CD4-positive, alpha-beta T cell (primary cell): ENCODE measurements at regions of chr1 and their contacts with region 1.

Region 1: GRCh38 chr1:9494929-9495758 is 44.1 kb upstream of the SLC25A33 start:
- DNase-seq: peak; percentile 40 to 86 (median 57)
- ATAC-seq: peak; percentile 86
- H3K4me3 ChIP-seq: peak overlapping the region; percentile 43
- H3K4me3 Mint-ChIP-seq: peak overlapping the region; percentile 72
- H3K27ac ChIP-seq: no peak overlapping the region
- H3K27ac Mint-ChIP-seq: no peak overlapping the region
- H3K4me1 ChIP-seq: peaks cover 13% of the 10 kb centered on the region
- H3K4me1 Mint-ChIP-seq: peaks cover 6% of the 10 kb centered on the region
- H3K27me3 ChIP-seq: no peaks in the 10 kb centered on the region
- H3K27me3 Mint-ChIP-seq: peaks cover 4% of the 10 kb centered on the region
- CTCF ChIP-seq: peak; percentile 93

Region 2: DNA sequence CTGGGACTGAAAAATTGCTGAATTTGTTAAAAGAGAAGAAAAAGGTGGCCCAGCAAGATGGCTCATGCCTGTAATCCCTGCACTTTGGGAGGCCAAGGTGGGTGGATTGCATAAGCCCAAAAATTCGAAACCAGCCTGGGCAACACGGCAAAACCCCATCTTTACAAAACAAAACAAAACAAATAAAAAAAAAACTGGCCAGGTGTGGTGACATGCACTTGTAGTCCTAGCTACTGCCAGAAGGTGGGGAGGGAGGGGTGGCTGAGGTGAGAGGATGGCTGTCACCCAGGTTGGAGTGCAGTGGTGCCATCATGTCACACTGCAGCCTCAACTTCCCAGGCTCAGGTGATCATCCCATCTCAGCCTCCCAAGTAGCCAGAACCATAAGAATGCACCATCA is 700.6 kb before region 1 on chr1:
- CTCF ChIA-PET with region 1: no interaction called
- POLR2A ChIA-PET with region 1: no interaction called
- intact Hi-C with region 1: no loop called
- DNase-seq: peak in 2 of 14 experiments; percentile 17 to 27
- ATAC-seq: peak; percentile 43
- H3K4me3 ChIP-seq: no peak overlapping the region
- H3K4me3 Mint-ChIP-seq: no peak overlapping the region
- H3K27ac ChIP-seq: no peak overlapping the region
- H3K27ac Mint-ChIP-seq: no peak overlapping the region
- H3K4me1 ChIP-seq: no peaks in the 10 kb centered on the region
- H3K4me1 Mint-ChIP-seq: no peaks in the 10 kb centered on the region
- H3K27me3 ChIP-seq: no peaks in the 10 kb centered on the region
- H3K27me3 Mint-ChIP-seq: no peaks in the 10 kb centered on the region
- CTCF ChIP-seq: no peak

Region 3: DNA sequence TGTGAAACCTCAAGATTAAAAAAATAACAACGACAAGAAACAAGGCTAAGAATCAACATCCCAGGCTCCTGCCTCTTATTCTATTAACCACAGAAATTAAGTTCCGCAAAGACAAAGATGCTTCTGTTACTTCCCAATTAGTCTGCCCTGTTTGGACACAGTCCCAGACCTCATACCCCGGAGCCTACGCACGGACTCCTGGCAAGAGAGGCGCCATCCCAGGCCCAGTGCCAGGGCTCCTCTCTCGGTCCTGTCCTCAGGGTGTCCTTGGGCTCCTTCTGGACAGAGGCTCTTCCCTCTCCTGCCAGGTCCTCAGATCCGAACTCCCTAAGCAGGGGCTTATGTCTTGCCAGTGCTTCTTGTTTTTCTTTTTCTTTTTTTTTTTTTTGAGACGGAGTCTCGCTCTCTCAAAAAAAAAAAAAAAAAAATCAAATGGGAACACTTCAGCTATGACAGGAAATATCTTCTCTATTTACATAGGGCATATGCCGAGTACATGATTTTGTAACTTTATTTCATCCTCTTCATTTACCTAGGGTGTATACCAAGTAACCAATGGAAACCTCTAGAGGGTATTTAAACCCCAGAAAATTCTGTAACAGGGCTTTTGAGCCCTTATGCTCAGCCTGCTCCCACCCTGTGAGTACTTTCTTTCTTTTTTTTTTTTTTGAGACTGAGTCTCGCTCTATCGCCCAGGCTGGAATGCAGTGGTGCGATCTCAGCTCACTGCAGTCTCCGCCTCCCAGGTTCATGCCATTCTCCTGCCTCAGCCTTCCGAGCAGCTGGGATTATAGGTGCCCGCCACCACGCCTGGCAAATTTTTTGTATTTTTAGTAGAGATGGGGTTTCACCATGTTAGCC is 605.0 kb before region 1 on chr1:
- CTCF ChIA-PET with region 1: no interaction called
- POLR2A ChIA-PET with region 1: no interaction called
- intact Hi-C with region 1: no loop called
- DNase-seq: no peak
- ATAC-seq: no peak
- H3K4me3 ChIP-seq: no peak overlapping the region
- H3K4me3 Mint-ChIP-seq: no peak overlapping the region
- H3K27ac ChIP-seq: no peak overlapping the region
- H3K27ac Mint-ChIP-seq: no peak overlapping the region
- H3K4me1 ChIP-seq: no peaks in the 10 kb centered on the region
- H3K4me1 Mint-ChIP-seq: no peaks in the 10 kb centered on the region
- H3K27me3 ChIP-seq: no peaks in the 10 kb centered on the region
- H3K27me3 Mint-ChIP-seq: no peaks in the 10 kb centered on the region
- CTCF ChIP-seq: no peak

Region 4: GRCh38 chr1:9110669-9111356 is 384.3 kb before region 1 on chr1:
- CTCF ChIA-PET with region 1: interaction called, 7 read pairs
- POLR2A ChIA-PET with region 1: no interaction called
- intact Hi-C with region 1: loop called (anchors 2 kb)
- DNase-seq: peak; percentile 76 to 90 (median 82)
- ATAC-seq: peak; percentile 80
- H3K4me3 ChIP-seq: no peak overlapping the region
- H3K4me3 Mint-ChIP-seq: no peak overlapping the region
- H3K27ac ChIP-seq: no peak overlapping the region
- H3K27ac Mint-ChIP-seq: no peak overlapping the region
- H3K4me1 ChIP-seq: peaks cover 6% of the 10 kb centered on the region
- H3K4me1 Mint-ChIP-seq: peaks cover 15% of the 10 kb centered on the region
- H3K27me3 ChIP-seq: no peaks in the 10 kb centered on the region
- H3K27me3 Mint-ChIP-seq: no peaks in the 10 kb centered on the region
- CTCF ChIP-seq: peak; percentile 95

Region 5: DNA sequence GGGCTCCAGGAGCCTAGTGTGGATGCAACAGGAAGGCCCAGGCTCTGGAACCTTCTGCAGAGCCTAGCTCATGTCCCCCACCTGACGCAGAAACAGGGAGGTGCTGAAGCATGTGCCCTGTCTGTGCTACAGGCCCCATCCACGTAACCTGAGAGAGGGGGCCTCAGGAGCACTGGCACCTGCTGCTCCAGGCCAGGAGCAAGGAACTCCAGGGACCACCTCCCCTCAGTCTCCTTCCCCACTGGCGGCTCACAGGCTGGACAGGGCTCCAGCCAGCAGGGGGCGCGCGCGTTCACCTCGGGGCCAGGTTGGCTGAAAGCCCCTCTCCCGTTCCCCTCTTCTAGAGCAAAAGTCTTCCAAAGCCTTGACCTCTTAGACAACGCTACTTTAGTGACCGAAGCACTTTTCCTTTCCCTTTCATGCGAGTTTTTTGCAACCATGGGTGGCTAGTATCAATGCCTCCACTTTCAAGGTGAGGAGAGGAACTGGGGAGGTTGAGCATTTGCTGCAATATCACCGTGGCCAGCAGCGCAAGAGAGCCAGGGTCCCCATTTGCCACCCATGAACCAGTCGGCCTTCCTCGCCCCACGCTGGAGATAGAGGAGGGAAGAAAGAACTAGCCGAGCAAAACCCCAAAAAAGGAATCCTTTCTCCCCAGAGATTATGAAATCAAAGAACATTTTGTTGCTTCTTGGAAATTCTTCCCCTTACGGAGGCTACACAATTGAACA is 313.8 kb before region 1 on chr1:
- CTCF ChIA-PET with region 1: no interaction called
- POLR2A ChIA-PET with region 1: no interaction called
- intact Hi-C with region 1: loop called in 1 of 2 experiments (anchors 1 kb)
- DNase-seq: peak; percentile 39 to 78 (median 66)
- ATAC-seq: peak; percentile 71
- H3K4me3 ChIP-seq: peak overlapping the region; percentile 32
- H3K4me3 Mint-ChIP-seq: peak overlapping the region; percentile 67
- H3K27ac ChIP-seq: no peak overlapping the region
- H3K27ac Mint-ChIP-seq: no peak overlapping the region
- H3K4me1 ChIP-seq: peaks cover 19% of the 10 kb centered on the region
- H3K4me1 Mint-ChIP-seq: peaks cover 6% of the 10 kb centered on the region
- H3K27me3 ChIP-seq: peaks cover 27% of the 10 kb centered on the region in 2 experiments
- H3K27me3 Mint-ChIP-seq: peaks cover 50% of the 10 kb centered on the region
- CTCF ChIP-seq: peak; percentile 87

Region 6: DNA sequence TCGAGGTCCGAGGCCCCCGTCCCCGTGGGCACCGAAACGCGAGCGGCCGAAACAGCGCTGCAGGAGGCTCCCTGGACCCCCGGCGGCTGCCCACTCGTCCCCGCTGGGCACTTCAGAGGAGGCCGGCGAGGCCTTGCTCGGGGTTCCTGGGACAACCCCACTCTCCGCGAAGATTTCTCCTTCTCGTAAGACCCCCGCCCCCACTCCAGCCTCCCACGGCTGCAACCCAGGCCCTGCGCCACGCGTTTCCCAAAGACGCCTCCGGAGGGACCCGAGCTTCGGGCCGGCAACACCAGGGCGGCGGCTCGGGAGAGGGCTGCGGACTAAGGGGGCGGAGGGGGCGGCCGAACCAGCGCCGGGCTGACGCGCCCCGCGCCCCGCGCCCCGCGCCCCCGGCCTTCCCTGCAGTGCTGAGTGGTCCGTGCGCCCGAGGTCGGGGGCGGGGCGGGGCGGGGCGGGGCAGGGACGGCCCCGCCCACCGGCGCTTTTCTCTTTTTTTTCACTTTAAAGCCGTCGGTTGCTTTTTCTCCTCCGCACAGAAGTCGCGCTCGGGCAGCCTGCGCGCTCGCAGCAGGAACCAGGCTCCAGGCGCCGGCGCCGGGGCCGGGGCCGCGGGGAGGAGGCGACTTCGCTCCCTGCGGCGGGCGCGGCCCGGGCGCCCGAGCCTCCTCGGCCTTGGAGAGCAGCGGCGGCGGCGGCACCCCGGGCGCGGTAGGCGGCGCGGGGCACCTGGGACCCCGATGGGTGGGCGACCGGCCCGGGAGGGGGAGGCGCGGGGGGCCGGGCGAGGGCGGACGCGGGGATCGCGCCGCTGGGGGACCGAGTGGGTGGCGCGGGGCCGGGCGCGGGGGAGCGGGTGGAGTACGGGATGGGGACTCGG is 202.5 kb before region 1 on chr1 and contains the start of gene SPSB1:
- CTCF ChIA-PET with region 1: interaction called, 38 read pairs
- POLR2A ChIA-PET with region 1: interaction called, 8 read pairs
- intact Hi-C with region 1: loop called (anchors 1 kb)
- DNase-seq: peak; percentile 48 to 87 (median 64)
- ATAC-seq: peak; percentile 62
- H3K4me3 ChIP-seq: peak within 1 kb of the TSS; percentile 77
- H3K4me3 Mint-ChIP-seq: peak within 1 kb of the TSS; percentile 86
- H3K27ac ChIP-seq: no peak within 1 kb of the TSS
- H3K27ac Mint-ChIP-seq: peak within 1 kb of the TSS; percentile 48
- H3K4me1 ChIP-seq: peaks cover 33% of the 10 kb centered on the region
- H3K4me1 Mint-ChIP-seq: peaks cover 29% of the 10 kb centered on the region
- H3K27me3 ChIP-seq: no peaks in the 10 kb centered on the region
- H3K27me3 Mint-ChIP-seq: no peaks in the 10 kb centered on the region
- CTCF ChIP-seq: no peak
- total RNA-seq, gene SPSB1: 1.9 to 2.3 TPM

Region 7: GRCh38 chr1:9573723-9574122 is 78.6 kb after region 1 on chr1:
- CTCF ChIA-PET with region 1: interaction called, 7 read pairs
- POLR2A ChIA-PET with region 1: no interaction called
- intact Hi-C with region 1: loop called (anchors 1 kb)
- DNase-seq: peak in 2 of 14 experiments; percentile 22 to 45
- ATAC-seq: no peak
- H3K4me3 ChIP-seq: no peak overlapping the region
- H3K4me3 Mint-ChIP-seq: no peak overlapping the region
- H3K27ac ChIP-seq: no peak overlapping the region
- H3K27ac Mint-ChIP-seq: no peak overlapping the region
- H3K4me1 ChIP-seq: no peaks in the 10 kb centered on the region
- H3K4me1 Mint-ChIP-seq: no peaks in the 10 kb centered on the region
- H3K27me3 ChIP-seq: no peaks in the 10 kb centered on the region
- H3K27me3 Mint-ChIP-seq: no peaks in the 10 kb centered on the region
- CTCF ChIP-seq: no peak

Region 8: DNA sequence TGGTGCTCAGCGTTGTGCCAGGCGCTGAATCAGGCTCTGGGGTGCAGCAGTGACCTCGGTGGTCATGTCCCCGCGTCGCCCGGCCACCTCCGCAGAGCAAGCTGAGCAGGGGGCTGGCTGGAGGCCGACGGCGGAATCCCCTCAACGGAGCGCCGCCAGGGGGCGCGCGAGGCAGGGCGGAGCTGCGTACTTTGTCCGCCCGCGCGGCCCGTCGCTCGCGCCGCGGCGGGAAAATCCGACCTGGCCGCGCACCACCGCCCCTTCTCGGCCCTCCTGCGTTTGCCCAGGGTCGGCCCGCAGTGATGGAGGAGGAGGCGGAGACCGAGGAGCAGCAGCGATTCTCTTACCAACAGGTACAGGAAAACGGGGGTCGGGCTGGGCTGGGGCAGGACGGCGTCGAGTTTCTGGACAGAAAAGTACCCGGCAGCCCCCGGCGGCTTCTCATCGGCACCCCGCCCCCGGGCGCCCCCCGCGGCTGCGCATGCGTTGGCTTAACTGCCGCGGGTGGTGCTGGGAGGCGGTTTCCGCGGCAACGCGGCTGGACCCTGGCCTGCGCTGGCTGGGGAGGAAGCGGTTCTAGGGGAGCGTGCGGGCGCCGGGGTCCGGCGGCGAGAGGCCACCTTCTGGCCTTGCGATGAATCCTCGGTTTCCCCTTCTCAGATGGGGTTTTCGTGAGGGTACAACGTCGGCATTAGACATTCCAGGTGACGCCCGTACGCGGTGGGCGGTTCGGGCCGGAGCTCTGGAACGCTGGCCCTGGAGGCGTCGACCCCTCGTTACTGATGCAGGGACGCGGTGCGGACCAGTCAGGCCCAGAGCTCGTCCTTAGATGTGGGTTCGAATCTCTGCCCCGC is 935.3 kb after region 1 on chr1 and contains the start of gene CENPS:
- CTCF ChIA-PET with region 1: no interaction called
- POLR2A ChIA-PET with region 1: no interaction called
- intact Hi-C with region 1: loop called in 1 of 2 experiments (anchors 5 kb)
- DNase-seq: peak; percentile 72 to 95 (median 90)
- ATAC-seq: peak; percentile 79
- H3K4me3 ChIP-seq: peak within 1 kb of the TSS; percentile 71
- H3K4me3 Mint-ChIP-seq: peak within 1 kb of the TSS; percentile 94
- H3K27ac ChIP-seq: peak within 1 kb of the TSS; percentile 65 to 68
- H3K27ac Mint-ChIP-seq: peak within 1 kb of the TSS; percentile 92
- H3K4me1 ChIP-seq: peaks cover 26% of the 10 kb centered on the region
- H3K4me1 Mint-ChIP-seq: peaks cover 23% of the 10 kb centered on the region
- H3K27me3 ChIP-seq: no peaks in the 10 kb centered on the region
- H3K27me3 Mint-ChIP-seq: no peaks in the 10 kb centered on the region
- CTCF ChIP-seq: peak; percentile 98
- total RNA-seq, gene CENPS: 3.7 to 4.0 TPM